Panc1 (cell line): ENCODE measurements at regions of chr6 and their contacts with region 1.

Region 1: GRCh38 chr6:2127484-2127911 is 117.9 kb downstream of the GMDS start:
- DNase-seq: no peak
- ATAC-seq: no peak
- H3K4me3 ChIP-seq: no peak overlapping the region
- H3K27ac ChIP-seq: no peak overlapping the region
- H3K4me1 ChIP-seq: no peaks in the 10 kb centered on the region
- H3K27me3 ChIP-seq: no peaks in the 10 kb centered on the region
- CTCF ChIP-seq: no peak

Region 2: DNA sequence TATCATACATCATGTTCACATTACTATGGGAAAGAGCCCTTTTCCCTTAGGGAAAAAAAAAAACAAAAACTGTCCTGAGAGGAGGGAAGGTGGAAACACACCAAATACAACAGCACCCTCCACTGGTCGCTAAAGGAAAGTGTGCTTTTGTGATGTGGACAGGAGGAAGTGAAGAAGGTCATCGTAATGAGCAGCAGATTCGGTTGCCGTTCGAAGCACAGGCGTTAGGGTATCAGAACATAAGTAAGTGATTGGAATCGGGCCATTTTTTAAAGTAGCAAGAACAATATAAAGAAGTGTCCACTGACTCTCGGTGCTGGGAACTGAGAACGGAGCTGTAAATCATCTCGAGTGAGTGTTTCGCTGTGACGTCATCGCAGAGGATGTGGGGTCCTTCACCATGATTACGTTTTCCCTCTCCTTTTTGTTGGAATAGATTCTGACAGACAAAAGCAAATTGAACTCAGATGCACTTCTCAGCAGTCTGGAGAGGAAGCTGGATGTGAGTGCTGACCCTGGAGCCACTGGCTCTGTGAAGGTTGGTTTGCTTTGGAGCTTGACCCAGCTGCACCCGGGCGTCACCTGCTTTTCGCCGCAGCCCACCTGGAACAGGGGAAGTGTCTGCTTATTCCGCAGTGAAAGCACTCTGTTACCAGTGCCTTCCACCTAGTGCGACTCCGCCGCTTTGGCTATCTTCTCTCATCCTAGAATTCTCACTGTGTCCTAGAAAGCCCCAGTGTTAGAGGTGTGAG is 321.5 kb after region 1 on chr6:
- CTCF ChIA-PET with region 1: no interaction called
- POLR2A ChIA-PET with region 1: no interaction called
- in situ Hi-C with region 1: no loop called
- intact Hi-C with region 1: loop called (anchors 1 kb)
- DNase-seq: peak; percentile 50
- ATAC-seq: peak; percentile 89
- H3K4me3 ChIP-seq: peak overlapping the region; percentile 13 to 40; a peak in 3 of 4 replicates
- H3K27ac ChIP-seq: no peak overlapping the region
- H3K4me1 ChIP-seq: no peaks in the 10 kb centered on the region
- H3K27me3 ChIP-seq: no peaks in the 10 kb centered on the region; the same call in none of the 2 replicates
- CTCF ChIP-seq: peak; percentile 84